ENCODE measurements at regions of chr17 and their contacts with region 1.

Region 1: GRCh38 chr17:781805-782731 is at the starts of genes GLOD4 and MRM3:
- DNase-seq: peak; percentile 90 to 97 (median 94)
- H3K4me3 ChIP-seq: peak within 1 kb of the TSS; percentile 94
- H3K4me3 Mint-ChIP-seq: peak within 1 kb of the TSS; percentile 95 to 99 (median 98)
- H3K27ac ChIP-seq: peak within 1 kb of the TSS; percentile 90
- H3K27ac Mint-ChIP-seq: peak within 1 kb of the TSS; percentile 96 to 99 (median 98)
- H3K4me1 ChIP-seq: peaks cover 26% of the 10 kb centered on the region
- H3K4me1 Mint-ChIP-seq: peaks cover 29 to 43% (median 33%) of the 10 kb centered on the region in 3 donors
- H3K27me3 ChIP-seq: no peaks in the 10 kb centered on the region
- H3K27me3 Mint-ChIP-seq: peaks cover 0 to 3% of the 10 kb centered on the region in 2 donors
- total RNA-seq, gene GLOD4: 76.4 to 90.6 TPM
- total RNA-seq, gene MRM3: 35.5 to 37.4 TPM

Region 2: GRCh38 chr17:752002-752619 is 30.0 kb before region 1 on chr17 and contains the start of gene GEMIN4:
- CTCF ChIA-PET with region 1: interaction called, 10 read pairs
- POLR2A ChIA-PET with region 1: interaction called, 17 read pairs
- DNase-seq: peak; percentile 94 to 98 (median 97)
- H3K4me3 ChIP-seq: peak within 1 kb of the TSS; percentile 86
- H3K4me3 Mint-ChIP-seq: peak within 1 kb of the TSS; percentile 90 to 95 (median 94)
- H3K27ac ChIP-seq: peak within 1 kb of the TSS; percentile 72
- H3K27ac Mint-ChIP-seq: peak within 1 kb of the TSS; percentile 74 to 98 (median 93)
- H3K4me1 ChIP-seq: peaks cover 23% of the 10 kb centered on the region
- H3K4me1 Mint-ChIP-seq: peaks cover 35 to 48% (median 40%) of the 10 kb centered on the region in 3 donors
- H3K27me3 ChIP-seq: no peaks in the 10 kb centered on the region
- H3K27me3 Mint-ChIP-seq: no peaks in the 10 kb centered on the region
- total RNA-seq, gene GEMIN4: 55.5 to 56.5 TPM

Region 3: DNA sequence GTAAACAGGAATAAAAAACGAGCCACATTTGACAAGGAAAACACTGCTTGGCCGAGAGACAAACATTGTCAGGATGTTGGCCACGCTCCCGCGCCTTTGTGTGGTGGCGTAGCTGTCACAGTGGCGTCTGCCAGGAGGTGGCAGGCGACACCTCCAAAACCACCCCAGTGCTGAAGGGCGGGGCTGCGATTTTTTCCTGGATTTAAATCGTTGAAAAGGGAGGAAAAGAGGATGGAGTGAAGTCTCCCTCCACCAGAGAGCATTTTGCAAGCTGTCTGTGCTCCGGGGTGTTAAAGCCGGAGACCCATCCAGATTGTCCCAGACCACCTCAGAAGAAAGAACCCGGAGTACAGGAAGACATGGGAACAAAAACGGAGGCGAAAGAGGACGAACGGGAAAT is 12.8 kb after region 1 on chr17:
- CTCF ChIA-PET with region 1: interaction called, 6 read pairs
- POLR2A ChIA-PET with region 1: interaction called, 14 read pairs
- DNase-seq: peak; percentile 8 to 54 (median 13)
- H3K4me3 ChIP-seq: no peak overlapping the region
- H3K4me3 Mint-ChIP-seq: peak overlapping the region in 1 of 7 donors; percentile 5
- H3K27ac ChIP-seq: no peak overlapping the region
- H3K27ac Mint-ChIP-seq: peak overlapping the region in 2 of 8 donors; percentile 29 to 33
- H3K4me1 ChIP-seq: no peaks in the 10 kb centered on the region
- H3K4me1 Mint-ChIP-seq: peaks cover 5 to 6% (median 5%) of the 10 kb centered on the region in 3 donors
- H3K27me3 ChIP-seq: no peaks in the 10 kb centered on the region
- H3K27me3 Mint-ChIP-seq: no peaks in the 10 kb centered on the region

Region 4: GRCh38 chr17:850851-851763 is 69.0 kb after region 1 on chr17:
- CTCF ChIA-PET with region 1: no interaction called
- POLR2A ChIA-PET with region 1: no interaction called
- DNase-seq: no peak
- H3K4me3 ChIP-seq: no peak overlapping the region
- H3K4me3 Mint-ChIP-seq: no peak overlapping the region
- H3K27ac ChIP-seq: no peak overlapping the region
- H3K27ac Mint-ChIP-seq: no peak overlapping the region
- H3K4me1 ChIP-seq: no peaks in the 10 kb centered on the region
- H3K4me1 Mint-ChIP-seq: peaks cover 7 to 11% (median 8%) of the 10 kb centered on the region in 3 donors
- H3K27me3 ChIP-seq: peaks cover 7% of the 10 kb centered on the region
- H3K27me3 Mint-ChIP-seq: peaks cover 16 to 49% of the 10 kb centered on the region in 2 donors

Region 5: GRCh38 chr17:879549-880442 is 97.7 kb after region 1 on chr17:
- CTCF ChIA-PET with region 1: no interaction called
- POLR2A ChIA-PET with region 1: no interaction called
- DNase-seq: peak; percentile 49 to 78 (median 51)
- H3K4me3 ChIP-seq: no peak overlapping the region
- H3K4me3 Mint-ChIP-seq: no peak overlapping the region
- H3K27ac ChIP-seq: no peak overlapping the region
- H3K27ac Mint-ChIP-seq: peak overlapping the region in 1 of 8 donors; percentile 77
- H3K4me1 ChIP-seq: no peaks in the 10 kb centered on the region
- H3K4me1 Mint-ChIP-seq: peaks cover 7 to 10% (median 9%) of the 10 kb centered on the region in 3 donors
- H3K27me3 ChIP-seq: no peaks in the 10 kb centered on the region
- H3K27me3 Mint-ChIP-seq: peaks cover 34 to 35% of the 10 kb centered on the region in 2 donors

Measured in CD8-positive, alpha-beta memory T cell (primary cell).